Activated CD4-positive, alpha-beta memory T cell treated with anti-CD3 and anti-CD28 coated beads for 36 hours (primary cell): ENCODE measurements at regions of chr18 and their contacts with region 1.

Region 1: GRCh38 chr18:23377669-23378301 is 75.3 kb upstream of the RIOK3 start:
- DNase-seq: no peak
- H3K4me3 Mint-ChIP-seq: no peak overlapping the region
- H3K27ac Mint-ChIP-seq: peak overlapping the region; percentile 28
- H3K4me1 Mint-ChIP-seq: peaks cover 13% of the 10 kb centered on the region
- H3K27me3 Mint-ChIP-seq: no peaks in the 10 kb centered on the region

Region 2: GRCh38 chr18:22977847-22978701 is 399.7 kb before region 1 on chr18:
- CTCF ChIA-PET with region 1: no interaction called
- POLR2A ChIA-PET with region 1: no interaction called
- intact Hi-C with region 1: loop called (anchors 1 kb)
- DNase-seq: no peak
- H3K4me3 Mint-ChIP-seq: peak overlapping the region; percentile 30
- H3K27ac Mint-ChIP-seq: peak overlapping the region; percentile 89
- H3K4me1 Mint-ChIP-seq: peaks cover 19% of the 10 kb centered on the region
- H3K27me3 Mint-ChIP-seq: no peaks in the 10 kb centered on the region

Region 3: DNA sequence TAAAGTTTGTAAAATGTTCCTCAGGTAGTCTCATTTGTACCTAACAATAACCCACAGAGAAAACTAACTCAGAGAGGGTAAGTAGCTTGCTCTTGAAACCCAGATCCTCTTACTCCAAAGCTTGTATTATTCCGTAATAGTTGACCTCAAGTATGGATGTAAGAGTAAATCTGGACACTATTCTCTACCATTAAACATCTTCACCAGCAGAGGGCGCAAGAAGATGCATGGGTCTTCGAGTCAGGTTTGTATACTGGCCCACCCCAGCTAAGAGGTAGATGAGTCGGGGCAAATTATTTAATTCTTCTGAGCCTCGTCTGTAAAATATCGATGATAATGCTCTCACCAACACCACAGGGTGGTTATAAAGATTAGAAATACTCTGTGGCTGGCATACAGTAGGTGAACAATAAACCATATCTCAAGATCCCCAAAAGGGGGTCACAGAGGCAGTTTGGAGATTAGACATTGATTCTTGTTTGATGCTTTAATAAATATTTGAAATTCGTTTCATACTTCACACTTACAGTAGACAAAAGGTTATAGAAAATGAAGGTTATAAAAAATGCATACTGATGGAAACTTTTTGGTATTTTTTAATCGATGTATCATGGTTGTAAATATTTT is 246.0 kb before region 1 on chr18:
- CTCF ChIA-PET with region 1: interaction called, 27 read pairs
- POLR2A ChIA-PET with region 1: no interaction called
- intact Hi-C with region 1: loop called (anchors 1 kb)
- DNase-seq: peak; percentile 55
- H3K4me3 Mint-ChIP-seq: peak overlapping the region; percentile 8
- H3K27ac Mint-ChIP-seq: no peak overlapping the region
- H3K4me1 Mint-ChIP-seq: peaks cover 14% of the 10 kb centered on the region
- H3K27me3 Mint-ChIP-seq: peaks cover 25% of the 10 kb centered on the region